PC-3 (cell line): ENCODE measurements at regions of chrX and their contacts with region 1.

Region 1: GRCh38 chrX:29911673-29912072 is 303.7 kb upstream of the MAGEB2 start:
- DNase-seq: peak; percentile 52
- ATAC-seq: no peak; the same call in 1 of the 2 replicates
- H3K4me3 ChIP-seq: no peak overlapping the region
- H3K27ac ChIP-seq: no peak overlapping the region
- H3K4me1 ChIP-seq: no peaks in the 10 kb centered on the region
- H3K27me3 ChIP-seq: no peaks in the 10 kb centered on the region
- CTCF ChIP-seq: peak; percentile 62

Region 2: GRCh38 chrX:29447869-29448268 is 463.8 kb before region 1 on chrX:
- CTCF ChIA-PET with region 1: no interaction called
- POLR2A ChIA-PET with region 1: no interaction called
- intact Hi-C with region 1: no loop called
- DNase-seq: no peak
- ATAC-seq: no peak
- H3K4me3 ChIP-seq: no peak overlapping the region
- H3K27ac ChIP-seq: no peak overlapping the region
- H3K4me1 ChIP-seq: no peaks in the 10 kb centered on the region
- H3K27me3 ChIP-seq: no peaks in the 10 kb centered on the region
- CTCF ChIP-seq: no peak

Region 3: DNA sequence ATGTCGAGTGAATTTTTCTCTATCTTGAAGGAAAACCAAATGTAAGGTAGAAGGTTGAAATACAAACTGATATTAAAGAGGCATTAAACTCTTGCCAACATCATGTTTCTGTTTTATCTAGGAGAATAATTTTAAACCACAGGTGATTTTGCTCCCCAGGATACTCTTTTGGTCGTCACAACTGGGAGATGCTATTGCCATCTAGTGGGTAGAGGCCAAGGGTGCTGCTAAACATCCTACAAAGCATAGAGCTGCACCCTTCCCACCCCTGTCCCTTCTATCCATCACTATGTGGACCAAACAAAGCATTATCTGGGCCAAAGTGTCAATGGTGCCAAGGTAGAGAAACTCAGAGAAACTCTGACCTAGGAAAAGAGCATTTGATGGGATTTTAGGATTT is 149.0 kb after region 1 on chrX:
- CTCF ChIA-PET with region 1: interaction called, 5 read pairs
- POLR2A ChIA-PET with region 1: no interaction called
- intact Hi-C with region 1: loop called (anchors 5 kb)
- DNase-seq: peak; percentile 47
- ATAC-seq: peak; percentile 74
- H3K4me3 ChIP-seq: no peak overlapping the region
- H3K27ac ChIP-seq: no peak overlapping the region
- H3K4me1 ChIP-seq: no peaks in the 10 kb centered on the region
- H3K27me3 ChIP-seq: no peaks in the 10 kb centered on the region
- CTCF ChIP-seq: peak; percentile 67

Region 4: DNA sequence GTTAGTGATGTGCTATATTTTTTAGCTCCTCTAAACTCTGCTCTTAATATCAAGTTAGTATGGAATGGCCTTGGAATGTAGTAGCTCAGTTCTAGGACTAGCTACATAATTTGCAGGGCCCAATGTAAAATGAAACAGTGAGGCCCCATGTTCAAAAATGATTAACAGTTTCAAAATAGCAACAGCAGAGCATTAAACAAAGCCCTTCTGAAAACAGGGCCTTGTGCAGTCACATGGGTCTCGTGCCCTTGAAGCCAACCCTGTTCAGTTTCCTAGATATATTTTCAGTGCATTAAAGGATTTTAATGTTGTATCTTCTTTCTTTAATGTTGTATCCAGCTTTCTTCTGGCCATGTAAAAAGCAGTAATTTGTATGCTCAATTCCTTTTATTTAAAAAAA is 583.8 kb after region 1 on chrX:
- CTCF ChIA-PET with region 1: no interaction called
- POLR2A ChIA-PET with region 1: no interaction called
- intact Hi-C with region 1: no loop called
- DNase-seq: no peak
- ATAC-seq: no peak
- H3K4me3 ChIP-seq: no peak overlapping the region
- H3K27ac ChIP-seq: no peak overlapping the region
- H3K4me1 ChIP-seq: no peaks in the 10 kb centered on the region
- H3K27me3 ChIP-seq: no peaks in the 10 kb centered on the region
- CTCF ChIP-seq: no peak